Breast epithelium (tissue), 4 donors: ENCODE measurements at regions of chr19 and their contacts with region 1.

Region 1: GRCh38 chr19:10079031-10079453 is 7.1 kb upstream of the SHFL start:
- DNase-seq: no peak
- H3K4me3 ChIP-seq: no peak overlapping the region
- H3K27ac ChIP-seq: no peak overlapping the region
- H3K4me1 ChIP-seq: no peaks in the 10 kb centered on the region
- H3K27me3 ChIP-seq: no peaks in the 10 kb centered on the region
- CTCF ChIP-seq: no peak
- POLR2A ChIP-seq: no peak

Region 2: DNA sequence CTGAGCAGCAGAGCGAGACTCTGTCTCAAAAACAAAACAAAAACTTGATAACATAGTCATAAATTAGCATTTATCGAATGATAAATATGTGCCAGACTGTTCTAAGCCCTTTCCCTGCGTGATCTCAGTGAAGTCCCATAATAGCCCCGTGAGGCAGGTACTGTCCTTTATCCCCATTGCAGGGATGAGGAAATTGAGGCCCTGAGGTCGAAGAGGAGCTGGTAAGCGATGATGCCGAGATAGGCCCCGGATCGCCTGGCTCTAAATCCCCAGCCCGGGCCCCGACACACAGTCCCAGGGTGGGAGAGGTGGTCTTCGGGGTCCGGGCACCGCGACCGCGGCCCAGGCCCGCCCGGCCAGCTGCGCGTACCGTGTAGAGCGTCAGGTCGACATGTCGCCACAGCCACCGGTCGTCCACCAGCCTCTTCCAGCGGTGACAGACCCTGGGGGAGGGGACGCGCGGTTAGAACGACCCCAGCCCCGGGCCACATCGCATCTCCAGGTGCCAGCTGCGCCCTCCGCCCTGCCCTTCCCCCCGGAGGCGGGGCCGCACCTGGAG is 260.8 kb before region 1 on chr19:
- intact Hi-C with region 1: no loop called
- DNase-seq: no peak
- H3K4me3 ChIP-seq: peak overlapping the region; percentile 80 to 97 (median 92)
- H3K27ac ChIP-seq: peak overlapping the region; percentile 94 to 96
- H3K4me1 ChIP-seq: no peaks in the 10 kb centered on the region
- H3K27me3 ChIP-seq: no peaks in the 10 kb centered on the region
- CTCF ChIP-seq: no peak
- POLR2A ChIP-seq: no peak

Region 3: DNA sequence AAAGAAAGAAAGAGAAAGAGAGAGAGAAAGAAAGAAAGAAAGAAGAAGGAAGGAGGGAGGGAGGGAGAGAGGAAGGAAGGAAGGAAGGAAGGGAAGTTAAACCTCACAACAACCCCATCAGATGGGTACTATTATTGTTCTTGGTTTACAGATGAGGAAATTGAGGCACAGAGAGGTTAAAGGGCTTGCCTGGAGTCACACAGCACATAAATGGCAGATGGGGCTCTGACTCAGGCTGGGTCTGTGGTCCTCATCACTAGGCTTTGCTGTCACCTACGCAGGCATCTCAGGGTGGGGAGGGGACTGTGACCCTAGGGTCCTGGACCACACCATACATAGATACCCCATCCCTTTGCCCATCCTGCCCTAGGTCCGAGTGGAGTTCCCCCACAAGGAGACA is 29.4 kb before region 1 on chr19:
- intact Hi-C with region 1: no loop called
- DNase-seq: no peak
- H3K4me3 ChIP-seq: no peak overlapping the region
- H3K27ac ChIP-seq: no peak overlapping the region
- H3K4me1 ChIP-seq: no peaks in the 10 kb centered on the region
- H3K27me3 ChIP-seq: peaks cover 0 to 6% of the 10 kb centered on the region in 2 donors
- CTCF ChIP-seq: no peak
- POLR2A ChIP-seq: no peak

Region 4: DNA sequence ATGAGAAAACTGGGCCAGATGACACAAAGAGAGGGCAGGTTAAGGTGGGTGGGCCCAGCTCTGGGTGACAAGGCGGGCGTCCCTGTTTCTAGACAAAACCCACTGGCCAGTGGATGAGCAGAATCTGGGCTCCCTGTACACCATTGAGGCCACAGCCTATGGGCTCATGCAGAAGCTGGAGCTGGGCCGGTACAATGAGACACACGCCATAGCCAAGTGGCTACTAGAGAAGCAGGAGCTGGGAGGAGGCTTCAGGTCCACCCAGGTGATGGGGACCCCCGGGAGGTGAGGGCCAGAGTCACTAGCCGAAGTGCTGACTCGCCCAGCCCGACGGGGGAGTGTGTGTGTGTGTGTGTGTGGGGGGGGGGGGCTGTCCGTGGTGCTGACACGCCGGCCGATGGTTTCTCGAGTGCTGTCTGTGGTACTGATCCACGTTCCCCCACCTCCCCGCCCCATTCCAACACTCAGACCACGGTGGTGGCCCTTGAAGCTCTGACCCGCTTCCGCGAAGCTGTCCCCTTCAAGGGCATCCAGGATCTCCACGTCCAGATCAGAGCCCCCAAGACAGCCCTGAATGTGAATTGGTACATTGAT is 17.2 kb before region 1 on chr19:
- intact Hi-C with region 1: loop called (anchors 1 kb)
- DNase-seq: no peak
- H3K4me3 ChIP-seq: no peak overlapping the region
- H3K27ac ChIP-seq: no peak overlapping the region
- H3K4me1 ChIP-seq: no peaks in the 10 kb centered on the region
- H3K27me3 ChIP-seq: peaks cover 0 to 19% of the 10 kb centered on the region in 2 donors
- CTCF ChIP-seq: no peak
- POLR2A ChIP-seq: no peak

Region 5: GRCh38 chr19:10095948-10096621 is 17.0 kb after region 1 on chr19:
- intact Hi-C with region 1: no loop called
- DNase-seq: peak; percentile 84
- H3K4me3 ChIP-seq: peak overlapping the region; percentile 40 to 79 (median 60)
- H3K27ac ChIP-seq: peak overlapping the region; percentile 71 to 88
- H3K4me1 ChIP-seq: no peaks in the 10 kb centered on the region
- H3K27me3 ChIP-seq: no peaks in the 10 kb centered on the region
- CTCF ChIP-seq: peak in 1 of 3 donors; percentile 7
- POLR2A ChIP-seq: no peak

Region 6: GRCh38 chr19:10106100-10106936 is 27.3 kb after region 1 on chr19 and contains the start of gene PPAN:
- intact Hi-C with region 1: no loop called
- DNase-seq: peak; percentile 97 to 98
- H3K4me3 ChIP-seq: peak within 1 kb of the TSS; percentile 71 to 92 (median 74)
- H3K27ac ChIP-seq: peak within 1 kb of the TSS; percentile 62 to 84
- H3K4me1 ChIP-seq: peaks cover 0 to 8% of the 10 kb centered on the region in 2 donors
- H3K27me3 ChIP-seq: no peaks in the 10 kb centered on the region
- CTCF ChIP-seq: no peak
- POLR2A ChIP-seq: no peak
- total RNA-seq, gene PPAN: 17.1 to 44.2 (median 35.3) TPM